Naive thymus-derived CD4-positive, alpha-beta T cell (primary cell): ENCODE measurements at regions of chr20 and their contacts with region 1.

Region 1: DNA sequence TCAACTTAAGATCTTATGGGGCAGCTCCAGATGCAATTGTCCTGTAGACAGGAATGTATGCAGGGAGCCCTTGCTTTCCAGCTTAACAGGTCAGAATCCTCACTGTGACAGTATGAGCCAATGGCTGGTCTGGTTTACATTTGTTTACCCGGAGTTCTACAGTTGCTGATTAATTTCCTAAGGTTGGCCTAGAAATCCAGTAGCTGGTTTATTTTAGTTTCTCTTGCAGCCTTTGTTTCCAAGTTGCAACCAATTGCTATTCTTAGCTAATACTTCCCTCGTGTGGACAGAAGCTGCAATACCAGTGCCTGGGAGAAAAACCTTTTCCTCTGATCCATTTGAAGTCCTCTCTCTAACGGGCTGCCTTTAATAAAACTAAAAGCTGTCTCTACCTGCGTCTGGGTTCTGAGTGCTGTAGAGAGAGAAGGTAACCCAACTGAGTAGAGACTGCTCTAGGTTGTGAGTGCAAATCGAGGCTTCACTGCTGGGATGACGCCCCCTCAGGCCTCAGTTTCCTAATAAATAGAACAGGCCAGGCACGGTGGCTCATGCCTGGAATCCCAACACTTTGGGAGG is 45.9 kb downstream of the ZNF217 start:
- DNase-seq: peak in 8 of 9 donors; percentile 27 to 61 (median 50)
- ATAC-seq: peak; percentile 54
- H3K4me3 ChIP-seq: no peak overlapping the region
- H3K4me3 Mint-ChIP-seq: no peak overlapping the region
- H3K27ac ChIP-seq: no peak overlapping the region
- H3K27ac Mint-ChIP-seq: no peak overlapping the region
- H3K4me1 ChIP-seq: no peaks in the 10 kb centered on the region
- H3K4me1 Mint-ChIP-seq: peaks cover 0 to 6% (median 5%) of the 10 kb centered on the region in 7 donors
- H3K27me3 ChIP-seq: no peaks in the 10 kb centered on the region
- H3K27me3 Mint-ChIP-seq: no peaks in the 10 kb centered on the region

Region 2: GRCh38 chr20:52127309-52127708 is 1420.4 kb before region 1 on chr20:
- CTCF ChIA-PET with region 1: interaction called, 17 read pairs
- POLR2A ChIA-PET with region 1: interaction called, 6 read pairs
- intact Hi-C with region 1: no loop called
- DNase-seq: no peak
- ATAC-seq: no peak
- H3K4me3 ChIP-seq: no peak overlapping the region
- H3K4me3 Mint-ChIP-seq: no peak overlapping the region
- H3K27ac ChIP-seq: no peak overlapping the region
- H3K27ac Mint-ChIP-seq: peak overlapping the region in 1 of 9 donors; percentile 3
- H3K4me1 ChIP-seq: no peaks in the 10 kb centered on the region
- H3K4me1 Mint-ChIP-seq: peaks cover 0 to 8% (median 2%) of the 10 kb centered on the region in 7 donors
- H3K27me3 ChIP-seq: no peaks in the 10 kb centered on the region
- H3K27me3 Mint-ChIP-seq: peaks cover 0 to 3% (median 0%) of the 10 kb centered on the region in 5 donors

Region 3: GRCh38 chr20:53032478-53032932 is 515.2 kb before region 1 on chr20:
- CTCF ChIA-PET with region 1: no interaction called
- POLR2A ChIA-PET with region 1: no interaction called
- intact Hi-C with region 1: loop called in 1 of 2 experiments (anchors 5 kb)
- DNase-seq: no peak
- ATAC-seq: no peak
- H3K4me3 ChIP-seq: no peak overlapping the region
- H3K4me3 Mint-ChIP-seq: no peak overlapping the region
- H3K27ac ChIP-seq: no peak overlapping the region
- H3K27ac Mint-ChIP-seq: peak overlapping the region in 3 of 9 donors; percentile 11 to 42 (median 31)
- H3K4me1 ChIP-seq: peaks cover 0 to 19% of the 10 kb centered on the region in 2 donors
- H3K4me1 Mint-ChIP-seq: peaks cover 22 to 70% (median 51%) of the 10 kb centered on the region in 7 donors
- H3K27me3 ChIP-seq: no peaks in the 10 kb centered on the region
- H3K27me3 Mint-ChIP-seq: peaks cover 0 to 7% (median 0%) of the 10 kb centered on the region in 5 donors

Region 4: DNA sequence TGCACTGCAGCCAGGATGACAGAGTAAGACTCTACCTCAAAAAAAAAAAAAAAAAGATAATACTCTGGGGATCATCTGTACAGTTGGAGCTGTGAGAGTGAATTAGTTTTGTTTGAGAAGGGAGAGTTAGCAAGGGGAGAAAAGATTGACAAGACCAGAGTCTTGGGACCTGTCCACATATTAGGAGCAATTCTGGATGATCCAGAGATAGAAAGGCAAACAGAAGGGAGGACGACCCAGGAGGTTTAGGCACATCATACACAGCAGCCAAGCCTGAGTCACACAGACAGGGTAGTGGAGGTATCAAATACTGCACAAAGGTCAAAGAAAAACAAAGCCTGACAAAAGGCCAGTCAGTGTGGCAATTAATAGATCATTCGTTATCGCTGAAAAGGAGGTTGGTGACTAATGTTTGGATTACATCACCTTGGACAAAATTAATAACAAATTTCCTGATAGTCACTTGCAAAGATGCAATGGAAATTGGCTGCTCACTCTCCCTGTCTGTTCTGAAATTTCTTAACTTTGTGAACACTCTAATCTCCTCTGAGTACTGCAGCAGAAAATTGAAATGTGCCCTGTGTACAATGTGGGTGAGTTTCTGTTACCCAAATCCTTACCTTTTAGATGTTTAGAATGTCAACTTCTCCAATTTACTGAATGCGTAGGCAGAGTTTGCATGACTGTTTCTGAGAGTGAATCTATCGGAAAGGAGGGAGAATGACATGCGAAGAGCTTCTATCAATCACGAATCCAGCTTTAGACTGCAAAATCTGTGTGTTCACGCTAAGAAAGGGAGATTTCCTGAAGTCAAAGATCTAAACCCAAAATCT is 470.2 kb before region 1 on chr20:
- CTCF ChIA-PET with region 1: no interaction called
- POLR2A ChIA-PET with region 1: no interaction called
- intact Hi-C with region 1: no loop called
- DNase-seq: no peak
- ATAC-seq: no peak
- H3K4me3 ChIP-seq: no peak overlapping the region
- H3K4me3 Mint-ChIP-seq: no peak overlapping the region
- H3K27ac ChIP-seq: no peak overlapping the region
- H3K27ac Mint-ChIP-seq: no peak overlapping the region
- H3K4me1 ChIP-seq: peaks cover 0 to 37% of the 10 kb centered on the region in 2 donors
- H3K4me1 Mint-ChIP-seq: peaks cover 15 to 44% (median 19%) of the 10 kb centered on the region in 7 donors
- H3K27me3 ChIP-seq: peaks cover 0 to 3% of the 10 kb centered on the region in 2 donors
- H3K27me3 Mint-ChIP-seq: peaks cover 0 to 8% (median 0%) of the 10 kb centered on the region in 5 donors

Region 5: DNA sequence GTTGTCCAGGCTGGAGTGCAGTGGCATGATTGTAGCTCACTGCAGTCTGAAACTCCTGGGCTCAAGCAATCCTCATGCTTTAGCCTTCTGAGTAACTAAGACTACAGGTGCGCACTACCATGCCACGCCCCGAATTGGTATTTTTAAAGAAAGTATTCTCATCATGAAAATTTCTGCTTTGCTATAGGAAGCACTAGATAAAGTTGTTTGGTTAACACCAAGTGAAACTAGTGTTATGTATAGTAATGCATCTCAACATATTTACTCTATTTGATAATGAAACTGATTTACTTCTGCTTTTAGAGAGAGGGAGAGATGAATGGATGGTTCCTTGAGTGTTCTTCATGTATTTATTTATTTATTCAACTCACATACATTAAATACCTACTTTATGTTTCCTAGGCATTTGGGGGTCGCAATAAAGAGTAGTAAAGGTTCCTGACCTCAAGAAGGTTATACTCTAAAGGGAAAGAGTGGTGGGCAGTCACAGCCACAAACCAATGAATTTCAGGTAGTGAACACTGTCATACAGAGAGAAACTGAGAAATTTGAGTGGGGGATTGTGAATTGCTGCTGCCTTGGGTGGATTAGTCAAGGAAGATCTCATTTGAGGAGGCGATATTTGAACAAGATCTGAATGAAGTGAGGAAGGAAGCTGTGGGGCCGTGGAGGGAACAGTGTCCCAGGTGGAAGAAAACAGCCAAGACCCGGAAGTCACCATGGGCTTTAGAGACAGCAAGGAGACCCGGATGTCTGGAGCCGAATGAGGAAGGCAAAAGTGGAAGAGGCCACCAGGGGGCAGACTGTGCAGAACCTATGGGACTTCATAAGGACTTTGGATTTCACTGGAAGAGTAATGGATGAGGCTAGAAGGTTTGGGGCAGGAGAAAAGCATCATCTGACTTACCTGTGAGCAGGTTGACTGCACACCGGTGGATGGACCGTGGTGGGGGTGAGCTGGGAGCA is 390.0 kb before region 1 on chr20:
- CTCF ChIA-PET with region 1: no interaction called
- POLR2A ChIA-PET with region 1: no interaction called
- intact Hi-C with region 1: loop called in 1 of 2 experiments (anchors 1 kb)
- DNase-seq: peak in 2 of 9 donors; percentile 16 to 29
- ATAC-seq: peak; percentile 38
- H3K4me3 ChIP-seq: no peak overlapping the region
- H3K4me3 Mint-ChIP-seq: no peak overlapping the region
- H3K27ac ChIP-seq: no peak overlapping the region
- H3K27ac Mint-ChIP-seq: peak overlapping the region in 5 of 9 donors; percentile 14 to 44 (median 30)
- H3K4me1 ChIP-seq: no peaks in the 10 kb centered on the region
- H3K4me1 Mint-ChIP-seq: peaks cover 17 to 55% (median 46%) of the 10 kb centered on the region in 7 donors
- H3K27me3 ChIP-seq: no peaks in the 10 kb centered on the region
- H3K27me3 Mint-ChIP-seq: peaks cover 0 to 3% (median 0%) of the 10 kb centered on the region in 5 donors

Region 6: DNA sequence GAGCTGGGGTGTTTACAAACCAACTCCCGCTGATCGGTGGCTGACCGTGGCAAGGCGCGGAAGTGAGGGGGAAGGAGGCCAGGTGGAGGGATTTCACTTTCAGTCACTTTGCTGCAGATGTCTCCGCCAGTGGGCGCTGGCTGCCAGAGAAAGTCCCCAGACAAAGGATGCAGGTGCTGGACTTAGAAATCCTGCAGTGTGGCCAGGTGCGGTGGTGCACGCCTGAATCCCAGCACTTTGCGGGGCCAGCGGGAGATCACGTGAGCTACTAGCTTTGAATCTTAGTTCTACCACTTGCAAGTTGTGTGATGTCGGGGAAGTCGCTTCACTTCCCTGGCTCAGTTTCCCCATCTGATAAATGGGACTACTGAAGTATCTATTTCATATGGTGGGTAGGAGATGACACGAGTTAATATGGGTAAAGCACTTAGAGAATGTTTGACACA is 134.5 kb before region 1 on chr20:
- CTCF ChIA-PET with region 1: interaction called, 6 read pairs
- POLR2A ChIA-PET with region 1: no interaction called
- intact Hi-C with region 1: loop called in 1 of 2 experiments (anchors 1 kb)
- DNase-seq: peak in 7 of 9 donors; percentile 11 to 43 (median 31)
- ATAC-seq: peak; percentile 52
- H3K4me3 ChIP-seq: no peak overlapping the region
- H3K4me3 Mint-ChIP-seq: peak overlapping the region in 6 of 10 donors; percentile 11 to 69 (median 42)
- H3K27ac ChIP-seq: no peak overlapping the region
- H3K27ac Mint-ChIP-seq: peak overlapping the region in 4 of 9 donors; percentile 32 to 78 (median 43)
- H3K4me1 ChIP-seq: no peaks in the 10 kb centered on the region
- H3K4me1 Mint-ChIP-seq: peaks cover 4 to 17% (median 8%) of the 10 kb centered on the region in 7 donors
- H3K27me3 ChIP-seq: no peaks in the 10 kb centered on the region
- H3K27me3 Mint-ChIP-seq: peaks cover 0 to 4% (median 0%) of the 10 kb centered on the region in 5 donors

Region 7: GRCh38 chr20:54062812-54063280 is 515.1 kb after region 1 on chr20:
- CTCF ChIA-PET with region 1: interaction called, 3 read pairs
- POLR2A ChIA-PET with region 1: no interaction called
- intact Hi-C with region 1: loop called (anchors 2 to 10 kb)
- DNase-seq: peak in 6 of 9 donors; percentile 8 to 40 (median 26)
- ATAC-seq: peak; percentile 61
- H3K4me3 ChIP-seq: no peak overlapping the region
- H3K4me3 Mint-ChIP-seq: no peak overlapping the region
- H3K27ac ChIP-seq: no peak overlapping the region
- H3K27ac Mint-ChIP-seq: no peak overlapping the region
- H3K4me1 ChIP-seq: peaks cover 0 to 9% of the 10 kb centered on the region in 2 donors
- H3K4me1 Mint-ChIP-seq: peaks cover 0 to 11% (median 7%) of the 10 kb centered on the region in 7 donors
- H3K27me3 ChIP-seq: no peaks in the 10 kb centered on the region
- H3K27me3 Mint-ChIP-seq: no peaks in the 10 kb centered on the region